ENCODE measurements at regions of chrX and their contacts with region 1.

Region 1: GRCh38 chrX:54182864-54183608 is at the start of gene FAM120C:
- DNase-seq: peak; percentile 92
- H3K4me3 ChIP-seq: peak within 1 kb of the TSS; percentile 72 to 88 (median 78)
- H3K27ac ChIP-seq: peak within 1 kb of the TSS; percentile 81 to 97 (median 92)
- H3K4me1 ChIP-seq: peaks cover 20 to 36% (median 27%) of the 10 kb centered on the region in 4 donors
- H3K27me3 ChIP-seq: no peaks in the 10 kb centered on the region
- CTCF ChIP-seq: no peak
- EP300 ChIP-seq: no peak
- POLR2A ChIP-seq: no peak
- total RNA-seq, gene FAM120C: 3.3 to 7.0 (median 5.9) TPM

Region 2: GRCh38 chrX:54044126-54044876 is 138.7 kb before region 1 on chrX and contains the start of gene PHF8:
- intact Hi-C with region 1: loop called (anchors 10 kb)
- DNase-seq: peak; percentile 96
- H3K4me3 ChIP-seq: peak within 1 kb of the TSS; percentile 68 to 82 (median 71)
- H3K27ac ChIP-seq: peak within 1 kb of the TSS; percentile 92 to 96 (median 94)
- H3K4me1 ChIP-seq: peaks cover 0 to 19% (median 13%) of the 10 kb centered on the region in 4 donors
- H3K27me3 ChIP-seq: no peaks in the 10 kb centered on the region
- CTCF ChIP-seq: no peak
- EP300 ChIP-seq: no peak
- POLR2A ChIP-seq: no peak
- total RNA-seq, gene PHF8: 18.5 to 28.7 (median 22.8) TPM